Endothelial cell of umbilical vein (primary cell): ENCODE measurements at regions of chr20 and their contacts with region 1.

Region 1: DNA sequence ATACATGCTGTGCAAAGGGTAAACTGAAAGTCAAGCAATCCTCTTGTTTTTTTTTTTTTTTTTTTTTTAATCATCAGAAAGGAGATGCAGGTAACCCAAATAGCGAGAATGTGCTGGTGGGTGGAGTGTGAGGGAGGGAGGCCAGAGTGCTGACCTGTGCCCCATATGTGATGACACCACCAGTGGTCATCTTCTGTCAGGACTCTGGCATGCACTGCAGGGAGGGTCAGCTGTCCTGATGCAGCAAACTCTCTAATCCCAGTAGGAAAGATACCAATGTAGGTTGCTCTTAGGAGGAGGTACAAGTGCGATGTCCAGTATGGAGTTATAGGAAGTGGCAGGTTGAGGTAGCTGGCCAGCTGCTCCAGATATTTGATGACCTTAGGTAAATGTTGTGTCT is 2.8 kb upstream of the CST4 start:
- DNase-seq: no peak
- H3K4me3 ChIP-seq: no peak overlapping the region
- H3K27ac ChIP-seq: no peak overlapping the region
- H3K4me1 ChIP-seq: peaks cover 38% of the 10 kb centered on the region
- H3K27me3 ChIP-seq: no peaks in the 10 kb centered on the region
- CTCF ChIP-seq: no peak
- POLR2A ChIP-seq: no peak

Region 2: DNA sequence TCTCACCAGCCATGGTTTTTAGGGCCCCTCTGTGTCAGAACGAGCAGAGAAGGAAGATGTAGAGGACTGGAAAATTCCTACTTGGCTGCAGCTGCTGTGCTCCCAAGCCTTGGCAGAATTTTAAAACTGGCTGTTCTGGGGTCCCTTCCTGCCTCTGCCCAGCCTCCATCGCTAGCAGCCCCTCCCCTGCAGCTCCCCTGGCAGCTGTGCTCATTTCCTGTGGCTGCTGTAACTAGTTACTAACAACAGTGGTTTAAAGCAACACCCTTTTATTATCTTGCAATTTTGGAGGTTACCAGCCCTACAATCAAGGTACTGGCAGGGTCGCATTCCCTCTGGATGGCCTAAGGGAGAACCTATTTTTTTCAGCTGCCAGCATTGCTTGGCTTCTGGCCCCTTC is 235.2 kb before region 1 on chr20:
- CTCF ChIA-PET with region 1: no interaction called
- POLR2A ChIA-PET with region 1: no interaction called
- dilution Hi-C with region 1: no loop called
- intact Hi-C with region 1: no loop called
- DNase-seq: no peak
- H3K4me3 ChIP-seq: no peak overlapping the region
- H3K27ac ChIP-seq: no peak overlapping the region
- H3K4me1 ChIP-seq: no peaks in the 10 kb centered on the region
- H3K27me3 ChIP-seq: no peaks in the 10 kb centered on the region
- CTCF ChIP-seq: no peak
- POLR2A ChIP-seq: no peak

Region 3: DNA sequence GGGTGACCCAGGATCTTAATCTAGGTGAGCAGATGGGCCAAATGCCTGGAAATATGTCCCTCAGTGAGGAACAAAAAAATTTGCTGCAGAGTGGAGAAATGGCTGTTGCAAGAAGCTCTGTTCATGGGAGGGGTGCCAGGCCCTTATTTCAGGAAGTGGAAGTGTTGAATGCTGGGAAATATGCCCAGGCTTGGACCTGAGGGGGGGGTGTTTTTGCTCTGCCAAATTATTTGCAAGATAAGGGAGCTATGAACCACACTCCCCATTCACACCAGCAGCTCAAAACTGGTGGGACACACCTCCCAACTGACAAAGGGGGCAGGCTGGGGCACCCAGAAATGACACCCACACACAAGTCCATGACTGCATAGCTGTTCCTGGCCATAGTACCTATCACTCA is 11.5 kb before region 1 on chr20:
- CTCF ChIA-PET with region 1: interaction called, 5 read pairs
- POLR2A ChIA-PET with region 1: no interaction called
- dilution Hi-C with region 1: no loop called
- intact Hi-C with region 1: loop called (anchors 1 kb)
- DNase-seq: no peak
- H3K4me3 ChIP-seq: no peak overlapping the region
- H3K27ac ChIP-seq: no peak overlapping the region
- H3K4me1 ChIP-seq: peaks cover 24% of the 10 kb centered on the region
- H3K27me3 ChIP-seq: no peaks in the 10 kb centered on the region
- CTCF ChIP-seq: no peak
- POLR2A ChIP-seq: no peak

Region 4: GRCh38 chr20:23744817-23745216 is 53.2 kb after region 1 on chr20:
- CTCF ChIA-PET with region 1: no interaction called
- POLR2A ChIA-PET with region 1: no interaction called
- dilution Hi-C with region 1: no loop called
- intact Hi-C with region 1: loop called (anchors 5 kb)
- DNase-seq: peak; percentile 19
- H3K4me3 ChIP-seq: no peak overlapping the region
- H3K27ac ChIP-seq: no peak overlapping the region
- H3K4me1 ChIP-seq: peaks cover 14% of the 10 kb centered on the region
- H3K27me3 ChIP-seq: no peaks in the 10 kb centered on the region
- CTCF ChIP-seq: no peak
- POLR2A ChIP-seq: no peak

Region 5: GRCh38 chr20:24027229-24027628 is 335.6 kb after region 1 on chr20:
- CTCF ChIA-PET with region 1: no interaction called
- POLR2A ChIA-PET with region 1: no interaction called
- dilution Hi-C with region 1: no loop called
- intact Hi-C with region 1: loop called (anchors 1 kb)
- DNase-seq: peak; percentile 90
- H3K4me3 ChIP-seq: no peak overlapping the region
- H3K27ac ChIP-seq: peak overlapping the region; percentile 85
- H3K4me1 ChIP-seq: peaks cover 14% of the 10 kb centered on the region
- H3K27me3 ChIP-seq: no peaks in the 10 kb centered on the region
- CTCF ChIP-seq: no peak
- POLR2A ChIP-seq: peak; percentile 48